ENCODE measurements at regions of chr5 and their contacts with region 1.

Region 1: DNA sequence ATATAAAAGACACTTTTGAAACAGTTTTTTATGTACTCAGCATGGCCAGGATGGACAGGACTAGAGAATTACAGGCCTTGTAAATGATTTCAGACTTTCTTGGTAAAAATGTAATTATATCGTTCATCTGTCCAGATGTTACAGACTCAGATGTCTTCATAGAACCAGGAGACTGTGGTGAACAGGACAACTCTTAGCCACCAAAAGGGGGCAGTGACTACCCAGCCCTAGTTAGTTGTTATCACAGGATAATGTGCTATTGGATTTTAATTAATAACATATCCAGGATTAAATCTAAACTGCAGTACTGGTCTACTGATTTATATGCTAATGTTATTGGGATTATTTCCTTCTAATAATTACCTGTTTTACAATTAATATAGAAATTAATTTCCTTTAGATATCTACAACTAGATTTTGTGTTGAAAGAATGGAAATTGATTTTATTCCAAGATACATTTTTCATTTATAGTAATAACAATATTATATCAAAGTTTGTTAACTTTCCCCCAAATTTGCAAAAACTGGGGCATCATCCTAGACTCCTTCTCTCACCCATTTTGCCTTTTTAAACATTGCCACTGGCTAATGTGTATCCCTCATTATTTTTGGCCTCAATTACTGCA is 99.4 kb downstream of the MTREX start:
- DNase-seq: no peak
- H3K4me3 ChIP-seq: no peak overlapping the region
- H3K27ac ChIP-seq: no peak overlapping the region
- H3K4me1 ChIP-seq: peaks cover 0 to 10% (median 6%) of the 10 kb centered on the region in 4 donors
- H3K27me3 ChIP-seq: no peaks in the 10 kb centered on the region
- CTCF ChIP-seq: peak; percentile 53 to 76 (median 62)
- EP300 ChIP-seq: no peak
- POLR2A ChIP-seq: no peak

Region 2: DNA sequence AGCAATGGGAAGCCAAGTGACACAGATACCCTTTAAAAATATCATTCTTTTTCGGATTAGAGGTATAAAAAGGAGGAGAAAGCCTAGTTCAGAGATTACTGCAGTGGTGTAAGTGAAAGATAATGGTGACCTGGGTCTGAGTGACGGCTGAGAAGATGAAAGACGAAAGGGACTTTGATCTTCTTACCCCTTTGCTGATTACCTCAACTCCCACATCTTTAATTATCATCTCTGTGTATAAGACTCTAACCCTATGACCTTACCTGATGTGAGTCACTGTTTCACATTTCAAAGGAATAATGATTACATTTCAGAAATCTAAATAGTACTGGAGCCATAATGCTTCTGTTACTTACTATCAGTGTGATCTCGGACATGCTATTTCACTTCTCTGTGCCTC is 152.4 kb before region 1 on chr5:
- in situ Hi-C with region 1: no loop called
- intact Hi-C with region 1: no loop called
- DNase-seq: no peak
- H3K4me3 ChIP-seq: no peak overlapping the region
- H3K27ac ChIP-seq: no peak overlapping the region
- H3K4me1 ChIP-seq: no peaks in the 10 kb centered on the region
- H3K27me3 ChIP-seq: no peaks in the 10 kb centered on the region
- CTCF ChIP-seq: no peak
- EP300 ChIP-seq: no peak
- POLR2A ChIP-seq: no peak

Region 3: GRCh38 chr5:55691265-55692105 is 284.3 kb after region 1 on chr5:
- in situ Hi-C with region 1: loop called in 3 of 4 experiments (anchors 5 to 25 kb)
- intact Hi-C with region 1: loop called (anchors 5 kb)
- DNase-seq: no peak
- H3K4me3 ChIP-seq: no peak overlapping the region
- H3K27ac ChIP-seq: peak overlapping the region; percentile 7 to 56 (median 28)
- H3K4me1 ChIP-seq: peaks cover 9 to 34% (median 19%) of the 10 kb centered on the region in 4 donors
- H3K27me3 ChIP-seq: no peaks in the 10 kb centered on the region
- CTCF ChIP-seq: peak; percentile 67 to 85 (median 71)
- EP300 ChIP-seq: no peak
- POLR2A ChIP-seq: no peak